T-cell (primary cell): ENCODE measurements at regions of chr11 and their contacts with region 1.

Region 1: DNA sequence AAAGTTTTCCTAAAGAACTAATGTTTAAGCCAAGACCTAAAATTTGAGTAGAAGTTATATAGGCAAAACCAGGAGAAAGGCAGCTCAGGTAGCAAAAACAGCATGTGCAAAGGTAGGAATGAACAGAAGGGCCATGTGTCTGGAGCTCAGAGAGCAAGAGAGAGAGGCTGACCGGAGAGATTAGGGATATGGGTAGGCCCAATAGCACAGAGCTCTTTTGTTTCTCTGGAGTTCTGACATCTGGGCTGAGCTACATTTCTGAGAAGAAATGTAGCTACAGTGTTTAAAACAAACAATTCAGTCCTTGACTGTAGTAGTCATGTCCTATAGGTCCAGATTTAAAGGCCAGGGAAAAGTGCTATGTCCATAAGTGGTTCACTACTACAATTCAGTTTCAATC is 4.5 kb downstream of the C11orf97 start:
- DNase-seq: no peak
- ATAC-seq: no peak
- H3K4me3 ChIP-seq: no peak overlapping the region
- H3K4me3 Mint-ChIP-seq: no peak overlapping the region
- H3K27ac ChIP-seq: no peak overlapping the region
- H3K27ac Mint-ChIP-seq: no peak overlapping the region
- H3K4me1 ChIP-seq: peaks cover 0 to 11% of the 10 kb centered on the region in 2 experiments
- H3K4me1 Mint-ChIP-seq: peaks cover 13 to 15% (median 14%) of the 10 kb centered on the region in 3 donors
- H3K27me3 ChIP-seq: peaks cover 0 to 6% of the 10 kb centered on the region in 2 experiments
- H3K27me3 Mint-ChIP-seq: peaks cover 13 to 24% of the 10 kb centered on the region in 2 donors

Region 2: DNA sequence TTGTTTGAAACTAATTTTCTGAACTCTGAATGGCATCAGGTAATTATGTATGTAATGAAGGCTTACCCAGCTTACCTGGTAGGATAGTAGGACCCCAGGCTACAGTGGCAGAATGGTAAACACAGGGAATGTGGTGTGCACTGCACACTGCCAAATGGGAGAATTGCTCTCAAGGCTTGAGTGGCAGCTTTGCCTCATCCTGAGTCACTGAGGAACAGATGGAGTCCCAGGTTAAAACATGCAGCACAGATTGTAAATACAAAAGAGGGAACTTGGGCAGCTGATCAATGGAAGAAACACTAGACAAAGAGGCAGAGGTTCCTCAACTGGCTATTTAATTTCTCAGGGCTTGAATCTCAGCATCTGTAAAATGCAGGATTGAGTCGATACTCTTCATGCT is 139.9 kb before region 1 on chr11:
- CTCF ChIA-PET with region 1: no interaction called
- POLR2A ChIA-PET with region 1: no interaction called
- DNase-seq: no peak
- ATAC-seq: no peak
- H3K4me3 ChIP-seq: no peak overlapping the region
- H3K4me3 Mint-ChIP-seq: no peak overlapping the region
- H3K27ac ChIP-seq: no peak overlapping the region
- H3K27ac Mint-ChIP-seq: no peak overlapping the region
- H3K4me1 ChIP-seq: no peaks in the 10 kb centered on the region
- H3K4me1 Mint-ChIP-seq: no peaks in the 10 kb centered on the region
- H3K27me3 ChIP-seq: peaks cover 0 to 9% of the 10 kb centered on the region in 2 experiments
- H3K27me3 Mint-ChIP-seq: peaks cover 0 to 9% of the 10 kb centered on the region in 2 donors

Region 3: GRCh38 chr11:94472916-94473799 is 43.6 kb before region 1 on chr11:
- CTCF ChIA-PET with region 1: no interaction called
- POLR2A ChIA-PET with region 1: no interaction called
- DNase-seq: peak in 10 of 35 experiments; percentile 1 to 50 (median 6)
- ATAC-seq: no peak
- H3K4me3 ChIP-seq: no peak overlapping the region
- H3K4me3 Mint-ChIP-seq: no peak overlapping the region
- H3K27ac ChIP-seq: peak overlapping the region; percentile 15
- H3K27ac Mint-ChIP-seq: no peak overlapping the region
- H3K4me1 ChIP-seq: peaks cover 0 to 10% of the 10 kb centered on the region in 2 experiments
- H3K4me1 Mint-ChIP-seq: peaks cover 12 to 23% (median 20%) of the 10 kb centered on the region in 3 donors
- H3K27me3 ChIP-seq: no peaks in the 10 kb centered on the region
- H3K27me3 Mint-ChIP-seq: no peaks in the 10 kb centered on the region

Region 4: DNA sequence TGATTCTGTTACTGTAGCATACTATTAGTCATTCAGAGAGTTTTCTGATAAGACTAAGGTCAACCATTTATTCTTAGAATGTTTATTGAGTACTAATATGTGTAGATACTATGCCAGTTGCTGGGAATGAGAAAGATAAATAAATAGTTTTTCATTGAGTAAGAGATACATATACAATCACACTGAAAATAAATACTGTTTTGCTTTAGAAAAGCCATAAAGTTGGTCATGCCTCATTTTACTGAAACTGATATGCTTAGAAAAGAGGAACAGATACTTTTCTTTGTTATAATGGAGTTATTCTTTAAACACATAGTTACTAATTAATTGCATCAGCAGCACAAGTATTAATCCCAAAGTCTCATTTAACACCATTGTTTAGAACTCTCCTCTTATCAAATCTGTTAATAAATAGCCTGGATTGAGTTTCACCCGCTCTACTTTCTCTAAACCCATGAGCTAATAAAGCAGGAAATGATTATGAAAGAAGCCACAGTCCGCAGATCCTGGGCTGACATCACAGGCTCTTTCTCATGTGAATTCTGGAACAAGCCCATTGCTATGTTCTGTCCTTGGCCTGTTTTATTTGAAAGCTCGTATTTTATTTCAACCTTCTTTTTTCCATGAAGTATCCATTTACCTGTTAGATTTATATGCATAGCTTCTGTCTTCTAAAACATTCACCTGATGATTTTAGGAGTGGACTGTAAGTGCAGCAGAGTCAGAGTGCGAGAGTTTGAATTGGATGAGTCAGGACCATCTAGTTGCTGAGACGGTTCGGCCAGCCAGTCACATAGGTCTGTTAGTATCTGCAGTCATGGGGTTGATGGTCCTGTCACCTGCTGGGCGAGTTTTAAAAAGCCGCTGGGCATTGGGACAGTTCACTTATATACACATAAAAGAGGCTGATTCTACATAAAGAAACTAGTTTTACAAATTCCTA is 86.0 kb after region 1 on chr11:
- CTCF ChIA-PET with region 1: interaction called, 3 to 14 read pairs
- POLR2A ChIA-PET with region 1: no interaction called
- DNase-seq: peak in 18 of 35 experiments; percentile 0 to 53 (median 8)
- ATAC-seq: peak in 2 of 4 experiments; percentile 46 to 65
- H3K4me3 ChIP-seq: no peak overlapping the region
- H3K4me3 Mint-ChIP-seq: no peak overlapping the region
- H3K27ac ChIP-seq: no peak overlapping the region
- H3K27ac Mint-ChIP-seq: no peak overlapping the region
- H3K4me1 ChIP-seq: no peaks in the 10 kb centered on the region
- H3K4me1 Mint-ChIP-seq: peaks cover 0 to 2% (median 2%) of the 10 kb centered on the region in 3 donors
- H3K27me3 ChIP-seq: no peaks in the 10 kb centered on the region
- H3K27me3 Mint-ChIP-seq: no peaks in the 10 kb centered on the region

Region 5: DNA sequence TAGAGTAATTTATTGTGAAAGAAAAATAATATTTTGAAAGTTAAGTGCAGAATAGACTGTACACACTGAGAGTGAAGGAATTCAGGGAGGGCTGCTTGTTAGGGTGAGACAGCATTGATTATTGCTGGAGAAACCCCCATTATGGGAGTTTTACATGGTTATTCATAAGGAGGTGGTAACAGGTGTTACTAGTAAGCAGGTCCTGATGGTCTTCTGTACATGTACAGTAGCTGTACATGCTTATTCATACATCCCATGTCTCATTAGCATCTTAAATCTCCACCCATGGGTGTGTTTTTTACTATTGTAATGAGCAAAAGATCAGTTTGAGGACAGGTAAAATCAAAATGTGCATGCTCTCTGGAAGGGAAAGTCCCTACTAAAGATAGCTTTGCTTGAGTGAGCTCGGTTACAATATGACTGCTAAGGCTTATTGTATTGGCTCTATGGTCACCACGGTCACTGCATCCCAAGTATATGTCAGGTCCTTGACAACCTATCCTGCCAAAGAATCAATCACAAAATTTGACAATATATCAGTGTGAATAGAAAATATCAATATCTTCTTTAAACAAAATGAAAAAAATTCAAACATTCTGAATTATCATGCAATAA is 538.7 kb after region 1 on chr11:
- CTCF ChIA-PET with region 1: no interaction called
- POLR2A ChIA-PET with region 1: interaction called in 1 of 2 experiments, 19 read pairs
- DNase-seq: no peak
- ATAC-seq: no peak
- H3K4me3 ChIP-seq: no peak overlapping the region
- H3K4me3 Mint-ChIP-seq: no peak overlapping the region
- H3K27ac ChIP-seq: no peak overlapping the region
- H3K27ac Mint-ChIP-seq: no peak overlapping the region
- H3K4me1 ChIP-seq: no peaks in the 10 kb centered on the region
- H3K4me1 Mint-ChIP-seq: no peaks in the 10 kb centered on the region
- H3K27me3 ChIP-seq: peaks cover 0 to 23% of the 10 kb centered on the region in 2 experiments
- H3K27me3 Mint-ChIP-seq: peaks cover 44 to 47% of the 10 kb centered on the region in 2 donors